CD8-positive, alpha-beta memory T cell (primary cell): ENCODE measurements at regions of chr10 and their contacts with region 1.

Region 1: GRCh38 chr10:68348265-68348741 is 15.6 kb upstream of the PBLD start:
- DNase-seq: peak; percentile 7 to 58 (median 24)
- H3K4me3 ChIP-seq: no peak overlapping the region
- H3K4me3 Mint-ChIP-seq: no peak overlapping the region
- H3K27ac ChIP-seq: no peak overlapping the region
- H3K27ac Mint-ChIP-seq: peak overlapping the region in 7 of 8 donors; percentile 48 to 88 (median 84)
- H3K4me1 ChIP-seq: no peaks in the 10 kb centered on the region
- H3K4me1 Mint-ChIP-seq: peaks cover 4 to 7% (median 5%) of the 10 kb centered on the region in 3 donors
- H3K27me3 ChIP-seq: no peaks in the 10 kb centered on the region
- H3K27me3 Mint-ChIP-seq: no peaks in the 10 kb centered on the region

Region 2: DNA sequence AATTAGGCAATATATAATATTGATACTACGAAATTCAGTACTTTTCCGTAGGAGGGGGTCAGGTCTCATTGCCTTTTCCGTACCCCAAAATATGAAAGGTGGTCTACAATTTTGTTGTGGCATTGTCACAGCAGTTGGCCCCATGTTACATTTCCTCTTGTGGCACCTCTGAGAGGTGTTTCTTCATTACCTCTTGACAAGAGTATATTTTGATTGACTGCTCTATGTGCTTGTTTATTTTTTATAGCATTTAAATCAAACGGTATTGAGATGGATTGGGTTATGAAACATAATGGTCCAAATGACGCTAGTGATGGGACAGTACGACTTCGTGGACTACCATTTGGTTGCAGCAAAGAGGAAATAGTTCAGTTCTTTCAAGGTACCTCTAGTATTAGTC is 11.4 kb before region 1 on chr10:
- CTCF ChIA-PET with region 1: interaction called, 18 read pairs
- POLR2A ChIA-PET with region 1: interaction called, 7 read pairs
- DNase-seq: no peak
- H3K4me3 ChIP-seq: no peak overlapping the region
- H3K4me3 Mint-ChIP-seq: peak overlapping the region; percentile 61 to 100 (median 96)
- H3K27ac ChIP-seq: no peak overlapping the region
- H3K27ac Mint-ChIP-seq: peak overlapping the region; percentile 35 to 98 (median 78)
- H3K4me1 ChIP-seq: peaks cover 27% of the 10 kb centered on the region
- H3K4me1 Mint-ChIP-seq: peaks cover 56 to 75% (median 74%) of the 10 kb centered on the region in 3 donors
- H3K27me3 ChIP-seq: no peaks in the 10 kb centered on the region
- H3K27me3 Mint-ChIP-seq: peaks cover 0 to 1% of the 10 kb centered on the region in 2 donors

Region 3: DNA sequence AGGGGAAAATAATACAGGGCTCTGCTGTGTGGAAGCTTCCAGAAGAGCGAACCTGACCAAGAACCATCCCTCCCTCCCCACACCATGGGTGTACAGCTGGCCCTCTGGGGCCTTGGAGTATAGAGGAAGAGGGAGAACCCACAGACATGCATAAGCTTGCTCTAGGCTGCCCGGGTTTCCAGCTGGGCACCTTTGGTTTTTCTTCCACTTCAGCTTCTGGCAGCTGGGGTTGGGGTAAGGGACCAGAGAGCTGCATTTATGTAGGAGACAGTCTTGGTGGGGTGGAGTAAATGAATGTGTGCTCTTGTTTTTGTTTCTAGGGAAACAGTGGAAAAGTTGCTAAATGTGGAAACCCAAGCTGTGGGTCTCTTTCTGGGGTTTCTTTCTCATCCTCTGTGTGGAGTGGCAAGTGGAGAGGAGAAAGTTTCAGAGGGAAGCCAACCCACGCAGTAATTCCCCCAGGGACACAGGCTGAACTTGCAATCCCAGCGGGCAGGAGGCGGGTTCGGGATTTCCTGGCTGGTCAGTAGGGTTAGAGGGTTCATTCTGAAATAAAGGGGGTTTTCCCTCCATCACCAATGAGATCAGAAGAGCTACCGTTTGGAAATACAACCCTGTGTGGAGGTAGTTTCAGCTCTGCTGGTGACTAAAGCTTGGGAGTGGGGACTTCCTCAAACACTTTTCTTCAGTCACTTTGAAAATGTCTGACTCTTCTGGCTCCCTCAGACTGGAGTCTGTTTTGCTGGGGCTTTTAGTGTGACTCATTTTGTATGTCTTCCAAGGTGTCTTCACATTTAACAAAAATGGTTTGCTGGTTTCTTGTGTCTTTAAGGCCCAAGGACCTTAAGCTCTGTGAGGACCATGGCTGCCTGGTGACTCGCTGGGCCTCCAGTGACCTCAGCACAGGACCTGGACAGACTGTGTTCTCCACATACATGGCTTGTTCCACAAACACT is 717.4 kb after region 1 on chr10:
- CTCF ChIA-PET with region 1: no interaction called
- POLR2A ChIA-PET with region 1: no interaction called
- DNase-seq: no peak
- H3K4me3 ChIP-seq: no peak overlapping the region
- H3K4me3 Mint-ChIP-seq: no peak overlapping the region
- H3K27ac ChIP-seq: no peak overlapping the region
- H3K27ac Mint-ChIP-seq: peak overlapping the region in 1 of 8 donors; percentile 28
- H3K4me1 ChIP-seq: peaks cover 14% of the 10 kb centered on the region
- H3K4me1 Mint-ChIP-seq: peaks cover 14 to 22% (median 14%) of the 10 kb centered on the region in 3 donors
- H3K27me3 ChIP-seq: no peaks in the 10 kb centered on the region
- H3K27me3 Mint-ChIP-seq: peaks cover 0 to 2% of the 10 kb centered on the region in 2 donors